ENCODE measurements at regions of chr21 and their contacts with region 1.

Region 1: DNA sequence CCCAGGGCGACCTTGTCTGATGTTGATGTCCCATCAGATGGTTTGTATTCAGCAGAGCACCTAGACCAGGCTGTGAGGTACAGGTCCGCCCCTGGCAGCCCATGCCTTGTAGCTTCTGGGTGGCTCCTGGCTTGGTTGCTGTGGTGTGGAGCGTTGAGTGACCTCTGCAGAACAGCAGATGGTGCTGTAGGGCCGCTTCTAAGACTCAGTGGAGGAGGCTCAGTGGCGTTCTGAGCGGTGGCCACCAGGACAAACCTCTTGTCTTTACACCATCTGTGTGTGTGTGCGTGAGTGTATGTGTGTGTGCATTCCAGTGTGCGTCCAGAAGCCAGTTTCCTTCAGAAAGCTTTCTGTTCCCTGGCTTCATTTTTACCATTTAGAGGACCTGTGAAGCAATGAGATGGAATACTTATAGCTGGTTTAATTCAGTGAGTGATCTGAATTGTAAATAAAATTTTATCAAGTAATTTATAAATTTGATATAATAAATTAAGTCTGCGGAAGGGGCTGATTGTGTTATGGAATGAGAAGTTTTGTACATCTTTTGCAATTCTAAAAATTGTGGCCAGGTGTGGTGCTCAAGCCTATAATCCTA is 66.1 kb downstream of the ADARB1 start:
- DNase-seq: peak; percentile 86
- H3K4me3 Mint-ChIP-seq: no peak overlapping the region
- H3K27ac Mint-ChIP-seq: no peak overlapping the region
- H3K4me1 Mint-ChIP-seq: peaks cover 13% of the 10 kb centered on the region
- H3K27me3 Mint-ChIP-seq: no peaks in the 10 kb centered on the region
- CTCF ChIP-seq: peak; percentile 95

Region 2: DNA sequence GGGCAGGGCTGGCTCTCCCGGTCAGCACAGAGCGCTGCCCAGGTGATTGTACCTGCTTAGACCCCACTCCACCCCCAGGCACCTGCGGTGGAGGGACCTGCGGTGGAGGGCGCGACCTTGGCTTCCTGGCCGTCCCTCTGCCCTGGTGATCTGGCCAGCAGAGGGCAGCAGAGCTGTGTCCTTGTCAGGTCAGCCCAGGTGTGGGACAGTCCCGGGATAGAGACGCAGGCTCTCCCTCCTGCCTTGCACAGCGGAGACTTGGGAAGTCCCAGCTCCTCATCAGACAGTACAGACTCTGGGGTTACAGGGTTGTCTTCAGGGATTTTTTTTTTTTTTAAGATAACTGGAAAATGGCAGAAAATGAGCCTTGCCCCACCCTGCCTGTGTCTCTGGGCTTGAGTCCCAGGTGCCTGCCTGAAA is 190.7 kb before region 1 on chr21:
- CTCF ChIA-PET with region 1: interaction called, 302 read pairs
- POLR2A ChIA-PET with region 1: interaction called, 14 read pairs
- intact Hi-C with region 1: loop called (anchors 1 kb)
- DNase-seq: peak; percentile 83
- H3K4me3 Mint-ChIP-seq: no peak overlapping the region
- H3K27ac Mint-ChIP-seq: no peak overlapping the region
- H3K4me1 Mint-ChIP-seq: peaks cover 11% of the 10 kb centered on the region
- H3K27me3 Mint-ChIP-seq: no peaks in the 10 kb centered on the region
- CTCF ChIP-seq: peak; percentile 90

Region 3: GRCh38 chr21:45098867-45099266 is 41.6 kb before region 1 on chr21:
- CTCF ChIA-PET with region 1: interaction called, 11 read pairs
- POLR2A ChIA-PET with region 1: no interaction called
- intact Hi-C with region 1: no loop called
- DNase-seq: peak; percentile 27
- H3K4me3 Mint-ChIP-seq: no peak overlapping the region
- H3K27ac Mint-ChIP-seq: peak overlapping the region; percentile 9
- H3K4me1 Mint-ChIP-seq: peaks cover 19% of the 10 kb centered on the region
- H3K27me3 Mint-ChIP-seq: no peaks in the 10 kb centered on the region
- CTCF ChIP-seq: peak; percentile 20

Region 4: DNA sequence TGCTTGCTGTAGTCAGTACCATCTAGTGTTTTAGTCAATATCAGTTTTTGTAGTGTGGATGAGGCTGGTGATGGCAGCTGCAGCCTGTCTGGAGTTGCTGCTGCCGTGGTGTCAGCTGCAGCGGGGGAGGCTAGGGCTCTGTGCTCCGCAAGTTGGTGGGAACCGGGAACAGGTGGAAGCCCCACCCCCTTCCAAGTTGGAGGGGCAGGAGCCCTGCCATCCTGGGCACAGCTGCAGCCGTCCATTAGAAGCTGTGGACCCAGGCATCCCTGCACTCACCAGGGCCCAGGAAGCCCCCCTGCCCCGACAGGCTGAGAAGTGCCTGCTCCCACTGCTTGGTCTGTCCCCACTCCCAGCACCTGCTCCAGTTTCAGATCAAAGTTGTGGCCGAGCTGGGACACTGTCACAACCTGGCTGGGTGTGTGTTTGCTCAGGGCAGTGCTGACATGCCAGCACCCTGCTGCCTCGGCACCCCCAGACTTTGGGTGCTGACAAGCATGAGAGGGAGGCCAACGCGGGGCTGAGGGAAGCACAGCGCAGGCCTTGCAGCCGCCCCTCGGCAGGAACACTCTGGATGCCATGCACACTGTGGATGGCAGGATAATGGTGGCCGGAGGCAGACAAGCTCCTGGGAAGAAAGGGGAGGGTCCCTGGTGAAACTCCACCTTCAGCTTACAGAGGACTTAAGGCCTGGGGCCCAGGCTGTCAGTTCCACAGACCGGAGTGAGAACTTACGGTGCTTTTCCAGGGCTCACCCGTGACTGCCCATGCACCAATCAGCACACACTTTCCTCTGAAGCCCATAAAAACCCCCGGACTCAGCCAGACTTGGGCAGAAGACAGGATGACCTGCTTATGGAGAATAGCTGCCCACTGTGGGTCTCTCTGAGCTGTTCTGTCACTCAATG is 20.8 kb after region 1 on chr21:
- CTCF ChIA-PET with region 1: interaction called, 21 read pairs
- POLR2A ChIA-PET with region 1: interaction called, 3 read pairs
- intact Hi-C with region 1: no loop called
- DNase-seq: no peak
- H3K4me3 Mint-ChIP-seq: no peak overlapping the region
- H3K27ac Mint-ChIP-seq: no peak overlapping the region
- H3K4me1 Mint-ChIP-seq: no peaks in the 10 kb centered on the region
- H3K27me3 Mint-ChIP-seq: no peaks in the 10 kb centered on the region
- CTCF ChIP-seq: no peak

Region 5: DNA sequence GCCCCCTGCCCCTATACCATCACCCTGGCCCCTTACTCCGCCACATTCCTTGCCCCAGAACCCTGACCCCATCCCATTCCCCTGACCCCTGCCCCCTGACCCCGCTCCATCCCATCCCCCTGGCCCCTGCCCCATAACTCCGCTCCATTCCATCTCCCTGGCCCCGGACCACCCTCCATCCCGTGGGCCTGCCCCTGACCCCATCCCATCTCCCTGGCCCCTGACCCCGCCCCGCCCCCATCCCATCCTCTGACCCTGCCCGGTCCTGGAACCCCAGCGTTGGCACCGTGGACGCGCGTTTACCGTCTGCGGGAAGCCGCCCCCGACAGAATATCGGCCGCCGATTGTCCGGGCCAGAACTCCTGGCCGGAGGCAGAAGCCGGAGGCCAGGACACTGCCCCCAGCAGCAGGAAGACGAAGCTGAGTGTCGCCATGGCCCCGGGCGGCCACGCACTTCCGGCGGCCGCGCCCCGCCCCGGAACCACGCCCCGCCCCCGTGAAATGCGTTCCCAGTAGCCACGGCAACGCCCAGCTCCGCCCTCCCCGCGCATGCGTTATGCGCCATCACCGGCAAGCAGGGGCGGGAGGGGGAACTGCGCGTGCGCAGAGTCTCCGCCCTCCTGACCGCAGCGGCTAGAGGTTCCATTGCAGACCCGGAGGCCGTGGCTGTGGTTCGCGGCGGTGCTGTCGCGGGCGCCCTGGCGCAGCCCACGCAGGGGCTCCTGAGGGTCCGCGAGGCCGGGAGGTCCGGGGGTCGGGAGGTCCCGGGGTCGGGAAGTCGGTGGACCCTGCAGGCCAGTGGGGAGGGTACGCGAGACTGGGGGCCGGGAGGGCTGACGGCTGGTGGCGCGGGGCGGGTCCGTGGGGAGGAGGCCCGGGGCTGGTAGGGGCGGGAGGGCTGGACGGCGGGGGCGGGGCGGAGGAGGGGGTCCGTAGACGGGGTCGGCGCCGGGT is 147.3 kb after region 1 on chr21 and contains the start of gene POFUT2:
- CTCF ChIA-PET with region 1: interaction called, 28 read pairs
- POLR2A ChIA-PET with region 1: interaction called, 15 read pairs
- intact Hi-C with region 1: loop called (anchors 1 kb)
- DNase-seq: peak; percentile 95
- H3K4me3 Mint-ChIP-seq: peak within 1 kb of the TSS; percentile 74
- H3K27ac Mint-ChIP-seq: peak within 1 kb of the TSS; percentile 31
- H3K4me1 Mint-ChIP-seq: peaks cover 9% of the 10 kb centered on the region
- H3K27me3 Mint-ChIP-seq: no peaks in the 10 kb centered on the region
- CTCF ChIP-seq: no peak
- total RNA-seq, gene POFUT2: 25.2 and 31.3 TPM in 2 replicates

Region 6: DNA sequence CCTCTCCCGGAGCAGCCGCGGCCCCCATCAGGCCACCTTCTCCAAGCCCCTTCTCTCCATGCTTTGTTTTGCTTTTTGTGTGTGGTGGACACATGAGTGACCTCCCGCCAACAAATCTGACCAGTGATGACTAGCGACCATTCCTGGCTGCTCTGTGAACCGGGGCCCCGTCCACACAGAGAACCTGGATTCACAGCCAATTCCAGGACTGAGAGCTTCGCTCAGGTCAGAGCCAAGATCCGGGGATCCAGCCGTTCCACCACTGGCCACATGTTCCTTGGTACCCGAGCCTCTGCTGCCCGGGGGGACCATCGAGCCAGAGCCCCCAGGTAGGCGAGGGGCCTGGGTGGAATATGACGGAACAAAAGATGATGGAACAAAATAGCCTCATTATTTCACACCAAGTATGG is 217.8 kb after region 1 on chr21:
- CTCF ChIA-PET with region 1: no interaction called
- POLR2A ChIA-PET with region 1: no interaction called
- intact Hi-C with region 1: no loop called
- DNase-seq: no peak
- H3K4me3 Mint-ChIP-seq: no peak overlapping the region
- H3K27ac Mint-ChIP-seq: no peak overlapping the region
- H3K4me1 Mint-ChIP-seq: no peaks in the 10 kb centered on the region
- H3K27me3 Mint-ChIP-seq: no peaks in the 10 kb centered on the region
- CTCF ChIP-seq: no peak

Region 7: DNA sequence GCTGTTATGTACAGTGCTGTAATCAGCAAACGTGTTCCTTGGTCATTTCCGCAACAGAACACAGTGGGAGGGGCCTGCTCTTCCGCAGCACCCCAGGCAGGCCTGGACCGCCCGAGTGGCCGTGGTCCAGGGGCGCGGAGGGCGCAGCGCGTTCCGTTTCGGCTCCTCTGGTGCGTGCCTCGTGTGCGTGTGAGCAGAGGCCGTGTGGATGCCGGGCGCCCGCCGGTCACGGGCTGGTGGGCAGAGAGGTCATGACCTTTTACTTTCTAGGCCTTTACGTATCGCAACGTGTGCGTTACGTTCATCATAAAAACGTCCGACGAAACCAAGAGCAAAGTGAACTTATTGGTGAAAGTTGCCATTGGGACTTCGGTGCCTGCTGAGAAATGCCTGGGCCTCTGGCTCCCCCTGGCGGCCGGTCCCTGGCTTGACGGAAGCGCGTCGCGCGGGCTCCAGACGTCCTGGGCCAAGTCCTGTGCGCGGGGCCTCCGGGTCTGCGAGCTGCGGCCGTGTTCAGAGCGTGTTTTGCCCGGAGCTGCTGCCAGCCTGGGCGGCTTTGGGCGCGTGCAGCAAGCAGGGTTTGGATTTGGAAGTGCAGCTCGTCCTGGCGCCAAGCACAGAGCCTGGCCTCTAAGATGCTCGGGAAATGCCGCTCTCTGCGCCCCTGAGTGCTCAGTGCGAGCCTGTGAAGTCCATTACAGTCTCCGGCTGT is 298.9 kb after region 1 on chr21:
- CTCF ChIA-PET with region 1: interaction called, 32 read pairs
- POLR2A ChIA-PET with region 1: no interaction called
- intact Hi-C with region 1: loop called (anchors 1 kb)
- DNase-seq: peak; percentile 68
- H3K4me3 Mint-ChIP-seq: no peak overlapping the region
- H3K27ac Mint-ChIP-seq: no peak overlapping the region
- H3K4me1 Mint-ChIP-seq: no peaks in the 10 kb centered on the region
- H3K27me3 Mint-ChIP-seq: peaks cover 7% of the 10 kb centered on the region
- CTCF ChIP-seq: peak; percentile 93

Measured in MCF 10A (cell line).